Psoas muscle (tissue), 8 donors: ENCODE measurements at regions of chr5 and their contacts with region 1.

Region 1: DNA sequence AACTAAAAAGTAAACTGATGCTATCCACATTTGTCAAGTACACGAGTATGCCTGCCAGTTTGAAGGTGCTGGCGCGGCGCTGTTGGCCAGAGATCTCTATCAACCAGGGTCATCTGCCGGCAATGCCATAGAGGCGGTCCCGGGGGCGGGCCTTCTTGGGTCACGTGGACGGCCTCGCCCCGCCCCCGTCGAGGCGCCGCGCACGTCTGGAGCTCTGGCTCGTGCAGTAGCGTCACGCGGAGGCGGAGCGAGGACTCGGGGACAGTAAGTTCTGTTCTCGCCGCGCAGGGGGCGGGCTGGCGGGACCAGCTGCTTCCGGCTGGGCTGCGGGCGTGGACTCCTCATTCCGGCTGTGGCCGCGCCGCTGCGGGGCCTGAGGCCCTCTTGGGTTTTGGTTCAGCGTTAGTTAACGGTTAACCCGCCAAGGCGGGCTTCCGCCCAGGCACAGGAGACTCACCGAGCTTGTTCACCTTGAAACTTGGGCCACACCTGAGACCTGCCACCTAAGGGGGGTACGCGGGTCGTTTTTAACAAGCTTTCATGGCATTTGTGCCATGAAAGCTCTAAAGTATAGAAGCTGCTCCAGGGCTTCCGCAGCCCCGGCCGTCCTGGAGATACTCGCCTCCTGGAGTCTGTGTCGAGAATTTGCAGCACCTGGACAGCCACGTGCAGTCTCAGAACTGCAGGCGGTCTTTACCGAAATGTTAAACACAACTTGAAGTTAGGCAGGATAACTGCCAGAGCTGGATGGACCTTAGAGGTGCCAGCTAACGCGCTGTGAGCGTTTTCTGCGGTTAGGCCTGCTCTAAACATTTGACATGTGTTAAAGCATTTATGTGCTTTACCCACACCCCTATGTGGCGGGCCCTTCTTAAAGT is at the start of gene RFESD:
- DNase-seq: peak; percentile 100
- ATAC-seq: peak; percentile 95 to 97 (median 96)
- H3K4me3 ChIP-seq: peak within 1 kb of the TSS; percentile 71
- H3K27ac ChIP-seq: peak within 1 kb of the TSS; percentile 97
- H3K4me1 ChIP-seq: peaks cover 6% of the 10 kb centered on the region
- H3K27me3 ChIP-seq: no peaks in the 10 kb centered on the region
- CTCF ChIP-seq: no peak
- total RNA-seq, gene RFESD: 3.2 to 3.9 (median 3.7) TPM

Region 2: GRCh38 chr5:95730730-95731570 is 84.2 kb after region 1 on chr5 and contains the start of gene RHOBTB3:
- intact Hi-C with region 1: loop called in 1 of 2 experiments (anchors 5 kb)
- DNase-seq: peak; percentile 91 to 95
- ATAC-seq: peak; percentile 81 to 84 (median 82)
- H3K4me3 ChIP-seq: peak within 1 kb of the TSS; percentile 90
- H3K27ac ChIP-seq: peak within 1 kb of the TSS; percentile 94
- H3K4me1 ChIP-seq: peaks cover 57% of the 10 kb centered on the region
- H3K27me3 ChIP-seq: no peaks in the 10 kb centered on the region
- CTCF ChIP-seq: no peak
- total RNA-seq, gene RHOBTB3: 44.0 to 86.0 (median 62.8) TPM

Region 3: GRCh38 chr5:95781101-95781583 is 134.3 kb after region 1 on chr5:
- intact Hi-C with region 1: loop called in 1 of 2 experiments (anchors 5 kb)
- DNase-seq: peak; percentile 80 to 88
- ATAC-seq: peak; percentile 79 to 88 (median 82)
- H3K4me3 ChIP-seq: no peak overlapping the region
- H3K27ac ChIP-seq: peak overlapping the region; percentile 73
- H3K4me1 ChIP-seq: peaks cover 49% of the 10 kb centered on the region
- H3K27me3 ChIP-seq: no peaks in the 10 kb centered on the region
- CTCF ChIP-seq: peak; percentile 88

Region 4: GRCh38 chr5:95846554-95847260 is 199.9 kb after region 1 on chr5:
- intact Hi-C with region 1: loop called (anchors 5 kb)
- DNase-seq: peak; percentile 64 to 71
- ATAC-seq: peak; percentile 52 to 74 (median 66)
- H3K4me3 ChIP-seq: no peak overlapping the region
- H3K27ac ChIP-seq: peak overlapping the region; percentile 4
- H3K4me1 ChIP-seq: peaks cover 15% of the 10 kb centered on the region
- H3K27me3 ChIP-seq: no peaks in the 10 kb centered on the region
- CTCF ChIP-seq: peak; percentile 98

Region 5: DNA sequence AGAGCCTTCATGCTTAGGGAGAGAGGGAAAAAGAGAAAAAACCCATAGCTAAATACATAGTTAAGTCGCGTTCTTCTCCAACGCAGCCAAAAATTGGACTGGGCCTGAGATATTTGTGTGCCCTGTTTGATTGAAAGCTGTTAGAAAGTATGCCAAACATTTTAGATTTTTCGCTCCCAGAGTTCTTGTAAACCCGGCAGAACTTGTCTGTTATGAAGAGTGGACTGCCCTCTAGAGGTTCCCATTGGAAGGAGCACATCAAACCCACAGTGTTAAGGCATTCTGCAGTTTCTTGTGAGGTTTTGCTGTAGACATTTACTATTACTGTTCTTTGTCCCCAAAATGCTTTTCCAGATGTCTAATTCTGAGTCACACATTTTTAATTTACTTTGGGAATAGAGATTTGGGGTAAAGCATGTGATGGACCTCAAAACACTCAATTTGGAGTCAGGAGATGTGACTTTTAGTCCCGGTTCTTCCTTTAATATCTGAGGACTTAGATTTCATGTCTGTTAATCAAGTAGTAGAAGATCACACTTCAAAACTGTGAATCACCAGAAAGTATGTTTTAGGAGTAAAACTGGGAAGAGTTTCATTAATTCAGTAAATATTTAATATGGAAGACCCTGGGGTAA is 689.7 kb after region 1 on chr5:
- intact Hi-C with region 1: loop called (anchors 5 to 10 kb)
- DNase-seq: peak in 1 of 2 donors; percentile 21
- ATAC-seq: peak; percentile 73 to 79 (median 76)
- H3K4me3 ChIP-seq: peak overlapping the region; percentile 35
- H3K27ac ChIP-seq: peak overlapping the region; percentile 85
- H3K4me1 ChIP-seq: peaks cover 40% of the 10 kb centered on the region
- H3K27me3 ChIP-seq: no peaks in the 10 kb centered on the region
- CTCF ChIP-seq: peak; percentile 92

Region 6: GRCh38 chr5:96370976-96371375 is 724.2 kb after region 1 on chr5:
- intact Hi-C with region 1: no loop called
- DNase-seq: no peak
- ATAC-seq: no peak
- H3K4me3 ChIP-seq: no peak overlapping the region
- H3K27ac ChIP-seq: no peak overlapping the region
- H3K4me1 ChIP-seq: no peaks in the 10 kb centered on the region
- H3K27me3 ChIP-seq: no peaks in the 10 kb centered on the region
- CTCF ChIP-seq: no peak

Region 7: GRCh38 chr5:96601811-96602244 is 955.0 kb after region 1 on chr5:
- intact Hi-C with region 1: loop called (anchors 10 kb)
- DNase-seq: no peak
- ATAC-seq: peak; percentile 67 to 96 (median 86)
- H3K4me3 ChIP-seq: no peak overlapping the region
- H3K27ac ChIP-seq: no peak overlapping the region
- H3K4me1 ChIP-seq: no peaks in the 10 kb centered on the region
- H3K27me3 ChIP-seq: no peaks in the 10 kb centered on the region
- CTCF ChIP-seq: peak; percentile 90

Region 8: DNA sequence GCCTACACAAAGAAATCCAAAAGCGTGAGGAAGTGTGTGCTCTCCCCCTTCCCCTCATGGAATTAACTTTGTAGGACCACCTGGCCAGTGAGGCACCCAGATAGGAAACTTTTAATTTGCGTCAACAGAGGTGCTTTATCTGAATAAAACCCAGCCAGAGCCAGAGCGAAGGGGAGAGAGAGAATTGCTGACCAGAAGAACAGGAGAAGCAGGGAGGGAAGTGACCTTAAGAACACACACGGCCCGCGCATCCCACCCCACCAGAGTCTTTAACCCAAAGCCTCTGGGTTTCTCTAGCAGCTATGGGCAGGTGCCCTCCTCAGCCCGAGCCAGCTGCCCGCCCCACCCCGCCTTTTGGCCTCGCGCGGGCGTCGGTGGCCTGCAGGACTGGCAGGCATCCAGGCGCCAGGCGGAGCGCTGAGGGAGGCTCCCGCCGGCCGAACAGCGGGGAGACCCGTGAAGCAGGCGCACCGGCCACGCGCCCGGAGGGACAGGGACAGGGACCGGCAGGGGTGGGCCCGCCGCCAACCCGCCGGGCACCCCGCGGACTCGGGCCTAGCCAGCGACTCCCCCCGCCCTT is 1160.4 kb after region 1 on chr5:
- intact Hi-C with region 1: loop called in 1 of 2 experiments (anchors 5 kb)
- DNase-seq: peak; percentile 88 to 93
- ATAC-seq: peak; percentile 79 to 86 (median 82)
- H3K4me3 ChIP-seq: peak overlapping the region; percentile 92
- H3K27ac ChIP-seq: peak overlapping the region; percentile 99
- H3K4me1 ChIP-seq: peaks cover 18% of the 10 kb centered on the region
- H3K27me3 ChIP-seq: no peaks in the 10 kb centered on the region
- CTCF ChIP-seq: no peak